MCF 10A (cell line): ENCODE measurements at regions of chr12 and their contacts with region 1.

Region 1: GRCh38 chr12:57124259-57124877 is 3.9 kb upstream of the LRP1 start:
- DNase-seq: peak; percentile 85
- H3K4me3 Mint-ChIP-seq: no peak overlapping the region
- H3K27ac Mint-ChIP-seq: no peak overlapping the region
- H3K4me1 Mint-ChIP-seq: peaks cover 11% of the 10 kb centered on the region
- H3K27me3 Mint-ChIP-seq: no peaks in the 10 kb centered on the region
- CTCF ChIP-seq: peak; percentile 90

Region 2: GRCh38 chr12:56338308-56339157 is 785.8 kb before region 1 on chr12 and contains the start of gene IL23A:
- CTCF ChIA-PET with region 1: no interaction called
- POLR2A ChIA-PET with region 1: no interaction called
- intact Hi-C with region 1: no loop called
- DNase-seq: peak; percentile 33
- H3K4me3 Mint-ChIP-seq: no peak within 1 kb of the TSS
- H3K27ac Mint-ChIP-seq: peak within 1 kb of the TSS; percentile 60
- H3K4me1 Mint-ChIP-seq: peaks cover 10% of the 10 kb centered on the region
- H3K27me3 Mint-ChIP-seq: no peaks in the 10 kb centered on the region
- CTCF ChIP-seq: no peak
- total RNA-seq, gene IL23A: 0.61 and 1.7 TPM in 2 replicates

Region 3: DNA sequence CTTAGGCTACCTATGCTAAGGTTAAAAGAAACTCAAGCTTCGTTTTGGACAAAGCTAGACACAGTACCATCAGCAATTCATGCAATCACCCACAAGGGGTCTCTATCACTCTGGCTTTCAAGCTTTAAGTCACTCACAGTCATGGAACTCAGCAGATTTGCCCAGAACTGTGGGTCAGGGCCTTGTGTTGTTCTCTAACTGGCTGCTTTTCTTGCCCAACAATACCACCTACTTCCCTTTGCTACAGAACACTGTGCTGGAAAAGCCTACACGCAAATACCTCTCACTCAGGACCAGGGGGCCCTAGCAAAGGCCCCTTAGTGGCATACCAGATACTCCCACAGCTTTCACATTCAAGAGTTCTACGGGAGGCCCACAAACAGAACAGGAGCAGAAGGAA is 54.8 kb before region 1 on chr12:
- CTCF ChIA-PET with region 1: interaction called, 31 read pairs
- POLR2A ChIA-PET with region 1: interaction called, 14 read pairs
- intact Hi-C with region 1: no loop called
- DNase-seq: peak; percentile 86
- H3K4me3 Mint-ChIP-seq: no peak overlapping the region
- H3K27ac Mint-ChIP-seq: peak overlapping the region; percentile 83
- H3K4me1 Mint-ChIP-seq: peaks cover 12% of the 10 kb centered on the region
- H3K27me3 Mint-ChIP-seq: no peaks in the 10 kb centered on the region
- CTCF ChIP-seq: peak; percentile 78

Region 4: GRCh38 chr12:57088459-57089248 is 35.7 kb before region 1 on chr12 and contains the start of gene NAB2:
- CTCF ChIA-PET with region 1: interaction called, 10 read pairs
- POLR2A ChIA-PET with region 1: interaction called, 26 read pairs
- intact Hi-C with region 1: no loop called
- DNase-seq: peak; percentile 96
- H3K4me3 Mint-ChIP-seq: peak within 1 kb of the TSS; percentile 90
- H3K27ac Mint-ChIP-seq: peak within 1 kb of the TSS; percentile 94
- H3K4me1 Mint-ChIP-seq: peaks cover 36% of the 10 kb centered on the region
- H3K27me3 Mint-ChIP-seq: no peaks in the 10 kb centered on the region
- CTCF ChIP-seq: no peak
- total RNA-seq, gene NAB2: 25.8 and 30.6 TPM in 2 replicates

Region 5: DNA sequence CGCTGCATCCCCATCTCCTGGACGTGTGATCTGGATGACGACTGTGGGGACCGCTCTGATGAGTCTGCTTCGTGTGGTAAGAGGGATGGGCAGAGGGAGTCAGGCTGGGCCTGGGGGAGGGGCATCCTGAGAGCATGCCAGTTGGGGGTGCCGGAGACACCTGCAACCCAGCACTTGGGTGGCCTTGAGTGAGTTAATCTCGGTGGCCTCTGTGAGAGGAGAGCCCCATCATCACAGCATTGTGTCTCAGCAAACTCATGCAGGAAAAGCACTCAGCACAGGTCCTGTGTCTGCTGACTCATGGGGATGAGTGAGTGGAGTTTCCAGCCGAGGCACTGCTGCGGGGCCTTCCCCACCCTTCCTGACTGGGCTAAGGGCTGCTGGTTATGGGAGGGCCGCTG is 42.6 kb after region 1 on chr12:
- CTCF ChIA-PET with region 1: interaction called, 530 read pairs
- POLR2A ChIA-PET with region 1: interaction called, 13 read pairs
- intact Hi-C with region 1: no loop called
- DNase-seq: peak; percentile 88
- H3K4me3 Mint-ChIP-seq: no peak overlapping the region
- H3K27ac Mint-ChIP-seq: peak overlapping the region; percentile 67
- H3K4me1 Mint-ChIP-seq: peaks cover 43% of the 10 kb centered on the region
- H3K27me3 Mint-ChIP-seq: no peaks in the 10 kb centered on the region
- CTCF ChIP-seq: no peak

Region 6: GRCh38 chr12:57182921-57183790 is 58.8 kb after region 1 on chr12:
- CTCF ChIA-PET with region 1: interaction called, 530 read pairs
- POLR2A ChIA-PET with region 1: interaction called, 24 read pairs
- intact Hi-C with region 1: loop called (anchors 1 kb)
- DNase-seq: peak; percentile 82
- H3K4me3 Mint-ChIP-seq: no peak overlapping the region
- H3K27ac Mint-ChIP-seq: peak overlapping the region; percentile 33
- H3K4me1 Mint-ChIP-seq: peaks cover 10% of the 10 kb centered on the region
- H3K27me3 Mint-ChIP-seq: no peaks in the 10 kb centered on the region
- CTCF ChIP-seq: peak; percentile 89

Region 7: GRCh38 chr12:57213058-57213715 is 88.8 kb after region 1 on chr12:
- CTCF ChIA-PET with region 1: interaction called, 10 read pairs
- POLR2A ChIA-PET with region 1: interaction called, 5 read pairs
- intact Hi-C with region 1: no loop called
- DNase-seq: peak; percentile 82
- H3K4me3 Mint-ChIP-seq: no peak overlapping the region
- H3K27ac Mint-ChIP-seq: no peak overlapping the region
- H3K4me1 Mint-ChIP-seq: peaks cover 20% of the 10 kb centered on the region
- H3K27me3 Mint-ChIP-seq: peaks cover 30% of the 10 kb centered on the region
- CTCF ChIP-seq: peak; percentile 92

Region 8: GRCh38 chr12:57965766-57966165 is 841.4 kb after region 1 on chr12:
- CTCF ChIA-PET with region 1: no interaction called
- POLR2A ChIA-PET with region 1: no interaction called
- intact Hi-C with region 1: no loop called
- DNase-seq: no peak
- H3K4me3 Mint-ChIP-seq: no peak overlapping the region
- H3K27ac Mint-ChIP-seq: no peak overlapping the region
- H3K4me1 Mint-ChIP-seq: no peaks in the 10 kb centered on the region
- H3K27me3 Mint-ChIP-seq: no peaks in the 10 kb centered on the region
- CTCF ChIP-seq: no peak